ENCODE measurements at regions of chr4 and their contacts with region 1.

Region 1: GRCh38 chr4:99949034-99949998 is 759 bp downstream of the H2AZ1 start:
- DNase-seq: peak; percentile 94 to 95 (median 94)
- ATAC-seq: peak; percentile 62
- H3K4me3 ChIP-seq: peak overlapping the region; percentile 62
- H3K4me1 ChIP-seq: peaks cover 31% of the 10 kb centered on the region
- CTCF ChIP-seq: peak; percentile 79

Region 2: GRCh38 chr4:99563310-99564186 is 385.8 kb before region 1 on chr4 and contains the start of gene TRMT10A:
- intact Hi-C with region 1: loop called in 1 of 2 experiments (anchors 5 kb)
- DNase-seq: peak; percentile 96 to 99 (median 98)
- ATAC-seq: peak; percentile 98
- H3K4me3 ChIP-seq: peak within 1 kb of the TSS; percentile 33
- H3K4me1 ChIP-seq: no peaks in the 10 kb centered on the region
- CTCF ChIP-seq: peak; percentile 26
- total RNA-seq, gene TRMT10A: 4.6 to 9.1 (median 7.7) TPM

Region 3: DNA sequence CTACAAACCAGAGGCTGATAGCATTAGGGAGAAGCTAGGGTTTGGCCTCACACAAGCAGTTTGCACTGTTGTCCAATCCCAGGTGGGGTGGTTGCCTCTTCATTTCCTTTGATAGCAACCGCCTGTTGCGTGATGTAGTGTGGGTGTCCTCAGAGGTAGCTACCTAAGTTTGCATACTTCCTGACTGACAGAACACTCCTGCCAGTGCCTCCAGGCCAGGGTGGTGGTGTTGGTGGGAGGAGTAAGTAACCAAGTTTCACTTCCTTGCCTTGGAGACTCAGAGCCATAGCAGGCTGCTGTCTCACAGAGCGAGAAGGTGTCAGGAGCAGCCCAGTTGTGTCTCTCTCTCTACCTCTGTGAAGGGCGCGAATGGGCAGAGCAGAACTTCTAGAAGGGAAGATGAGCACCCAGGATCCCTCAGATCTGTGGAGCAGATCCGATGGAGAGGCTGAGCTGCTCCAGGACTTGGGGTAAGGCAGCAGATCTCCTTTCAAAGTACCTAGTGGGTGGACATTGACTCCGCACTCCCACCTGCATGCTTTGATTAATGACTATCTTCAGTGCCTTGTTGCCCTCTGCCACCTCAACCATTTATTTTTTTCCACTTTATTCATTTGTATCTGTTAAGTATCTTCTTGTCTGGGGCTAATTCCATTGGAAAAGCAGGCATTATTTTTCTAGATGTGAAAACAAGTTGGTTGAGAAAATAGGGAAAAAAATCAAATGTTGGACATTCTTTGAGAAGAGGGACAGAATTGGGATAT is 132.6 kb before region 1 on chr4 and contains the start of gene DAPP1:
- intact Hi-C with region 1: loop called in 1 of 2 experiments (anchors 10 kb)
- DNase-seq: peak; percentile 59 to 83 (median 62)
- ATAC-seq: peak; percentile 82
- H3K4me3 ChIP-seq: no peak within 1 kb of the TSS
- H3K4me1 ChIP-seq: peaks cover 3% of the 10 kb centered on the region
- CTCF ChIP-seq: no peak
- total RNA-seq, gene DAPP1: 1.3 to 4.6 (median 1.7) TPM

Region 4: DNA sequence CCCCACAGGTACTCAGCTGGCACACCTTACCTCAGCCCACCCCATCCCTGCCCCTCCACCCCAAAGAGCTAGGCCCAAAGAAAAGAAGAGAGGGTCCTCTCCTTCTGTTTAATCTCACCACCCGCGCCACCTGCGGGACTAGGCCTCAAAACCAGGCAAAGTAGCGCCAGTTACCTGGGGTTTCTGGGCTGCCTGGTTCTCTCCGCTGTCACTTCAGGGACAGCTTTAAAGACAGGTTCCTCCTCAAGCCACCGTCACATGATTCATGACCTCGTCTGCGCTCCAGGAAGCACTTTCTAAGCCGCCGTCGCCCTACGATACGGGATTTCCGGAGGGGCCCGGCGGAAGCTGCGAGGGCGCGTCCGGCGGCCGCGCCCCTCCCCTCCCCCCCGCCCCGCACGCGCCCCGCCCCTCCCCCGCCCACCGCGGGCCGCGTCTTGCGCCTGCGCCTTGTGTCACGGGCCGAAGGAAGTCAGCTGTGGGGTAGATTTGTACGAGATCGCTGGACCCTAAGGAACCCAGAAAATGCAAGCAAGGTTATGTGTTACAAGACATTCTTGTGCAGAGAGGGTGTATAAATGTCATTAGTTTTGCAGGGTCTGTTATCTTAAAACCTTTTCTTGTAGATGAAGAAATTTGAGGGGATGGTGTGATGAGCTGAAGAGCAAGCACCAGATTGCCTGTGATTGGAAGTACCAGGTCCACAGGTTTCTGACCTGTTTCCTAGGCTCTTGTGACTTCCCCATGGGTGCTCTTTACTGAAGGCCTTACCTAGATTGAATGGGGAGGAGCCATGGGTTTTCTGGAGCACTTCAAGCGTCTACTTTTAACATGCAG is 54.9 kb before region 1 on chr4 and contains the start of gene LAMTOR3:
- intact Hi-C with region 1: loop called in 1 of 2 experiments (anchors 10 kb)
- DNase-seq: peak; percentile 92 to 95 (median 94)
- ATAC-seq: peak; percentile 100
- H3K4me3 ChIP-seq: peak within 1 kb of the TSS; percentile 67
- H3K4me1 ChIP-seq: peaks cover 12% of the 10 kb centered on the region
- CTCF ChIP-seq: no peak
- total RNA-seq, gene LAMTOR3: 42.4 to 60.7 (median 59.2) TPM

Region 5: GRCh38 chr4:100042227-100042626 is 92.9 kb after region 1 on chr4:
- intact Hi-C with region 1: no loop called
- DNase-seq: no peak
- ATAC-seq: no peak
- H3K4me3 ChIP-seq: no peak overlapping the region
- H3K4me1 ChIP-seq: no peaks in the 10 kb centered on the region
- CTCF ChIP-seq: no peak

Region 6: GRCh38 chr4:100149190-100149589 is 199.9 kb after region 1 on chr4:
- intact Hi-C with region 1: no loop called
- DNase-seq: no peak
- ATAC-seq: no peak
- H3K4me3 ChIP-seq: no peak overlapping the region
- H3K4me1 ChIP-seq: no peaks in the 10 kb centered on the region
- CTCF ChIP-seq: no peak

Measured in mucosa of descending colon (tissue), 3 donors.